CD14-positive monocyte (primary cell): ENCODE measurements at regions of chr2 and their contacts with region 1.

Region 1: DNA sequence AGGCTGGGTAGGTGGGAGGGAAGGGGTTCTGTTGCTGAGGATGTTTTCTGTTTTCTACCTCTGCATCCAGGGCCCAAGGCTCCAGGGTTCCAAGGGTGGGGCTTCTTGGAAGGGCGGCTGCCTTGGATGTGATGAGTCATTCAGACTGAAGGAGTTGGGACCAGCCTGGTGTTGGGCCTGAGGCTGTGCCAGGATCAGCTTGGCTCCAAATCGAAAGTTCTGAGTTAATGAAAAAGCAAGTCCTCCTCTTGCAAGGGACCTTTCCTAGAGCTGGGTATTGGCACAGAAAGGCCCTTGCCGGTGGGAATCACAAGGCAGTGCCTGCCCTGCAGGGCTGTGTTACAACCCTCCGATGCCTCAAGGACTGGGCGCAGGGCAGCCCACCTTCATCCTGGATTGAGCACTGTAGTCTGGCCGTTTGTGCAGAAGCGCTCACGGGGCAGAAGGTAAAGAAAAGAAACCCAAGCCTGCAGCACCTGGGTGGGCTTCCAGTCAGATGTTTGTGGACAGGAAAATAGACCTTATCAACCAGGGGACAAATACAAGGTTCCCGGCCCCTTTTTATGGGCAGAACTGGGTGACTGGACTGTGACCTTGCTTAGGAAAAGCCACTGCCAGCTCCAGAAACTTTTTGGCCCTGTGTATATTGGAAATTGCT is 52.5 kb upstream of the MCFD2 start:
- DNase-seq: peak; percentile 57 to 80 (median 76)
- H3K4me3 ChIP-seq: peak overlapping the region in 1 of 3 experiments; percentile 43
- H3K4me3 Mint-ChIP-seq: peak overlapping the region; percentile 62 to 68
- H3K27ac ChIP-seq: peak overlapping the region; percentile 97 to 98
- H3K27ac Mint-ChIP-seq: peak overlapping the region; percentile 96 to 100 (median 99)
- H3K4me1 ChIP-seq: peaks cover 92 to 99% of the 10 kb centered on the region in 2 donors
- H3K4me1 Mint-ChIP-seq: peaks cover 94% of the 10 kb centered on the region
- H3K27me3 ChIP-seq: no peaks in the 10 kb centered on the region
- H3K27me3 Mint-ChIP-seq: no peaks in the 10 kb centered on the region
- CTCF ChIP-seq: no peak

Region 2: DNA sequence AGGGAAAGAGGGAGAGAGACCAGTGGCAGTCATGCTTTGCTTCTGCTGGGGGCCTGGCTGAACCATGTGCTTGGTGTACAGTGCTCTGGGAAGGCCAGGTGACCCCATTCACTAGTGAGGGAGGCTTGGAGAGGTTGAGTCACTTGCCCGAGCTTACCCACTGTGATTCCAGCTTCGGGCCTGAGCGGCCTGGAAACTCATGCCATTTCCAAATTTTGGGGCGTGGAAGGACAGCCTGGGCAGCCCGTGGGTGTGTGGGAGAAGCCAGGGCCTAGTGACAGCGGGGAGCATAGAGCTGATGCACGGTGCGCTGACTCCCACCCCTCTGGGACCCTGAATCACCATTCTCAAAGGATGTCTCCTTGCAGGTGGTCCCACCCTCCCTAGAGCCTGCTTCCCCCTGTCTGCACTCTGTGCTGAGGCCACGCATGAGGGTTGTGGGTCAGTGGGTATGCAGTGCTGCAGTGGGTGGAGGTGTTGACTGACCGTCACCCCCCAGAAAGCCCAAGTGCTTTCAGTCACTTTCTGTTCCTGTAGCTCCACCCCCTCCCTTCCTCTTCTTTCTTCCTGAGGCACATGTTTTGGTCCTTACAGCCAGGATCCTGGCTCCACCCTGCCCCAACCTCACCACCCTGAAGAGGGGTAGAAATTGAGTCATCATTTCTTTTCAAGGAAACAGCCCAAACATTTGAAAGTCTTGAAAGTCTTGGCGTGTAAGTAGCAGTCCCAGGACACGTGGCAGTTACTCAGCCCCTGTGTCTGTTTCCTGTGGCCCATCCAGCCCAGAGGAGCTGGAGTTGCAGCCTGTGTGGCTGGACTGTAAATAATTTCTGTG is 16.7 kb after region 1 on chr2:
- intact Hi-C with region 1: loop called in 1 of 2 experiments (anchors 2 kb)
- DNase-seq: peak; percentile 94 to 98 (median 97)
- H3K4me3 ChIP-seq: peak overlapping the region in 1 of 3 experiments; percentile 53
- H3K4me3 Mint-ChIP-seq: peak overlapping the region; percentile 61 to 83
- H3K27ac ChIP-seq: peak overlapping the region; percentile 97 to 98
- H3K27ac Mint-ChIP-seq: peak overlapping the region; percentile 93 to 100 (median 99)
- H3K4me1 ChIP-seq: peaks cover 77% of the 10 kb centered on the region in 2 donors
- H3K4me1 Mint-ChIP-seq: peaks cover 74% of the 10 kb centered on the region
- H3K27me3 ChIP-seq: no peaks in the 10 kb centered on the region
- H3K27me3 Mint-ChIP-seq: peaks cover 0 to 3% (median 0%) of the 10 kb centered on the region in 3 donors
- CTCF ChIP-seq: no peak